ENCODE measurements at regions of chr10 and their contacts with region 1.

Region 1: GRCh38 chr10:97612386-97612785 is 20.9 kb downstream of the MORN4 start:
- DNase-seq: no peak
- ATAC-seq: peak; percentile 63 to 79
- H3K4me3 ChIP-seq: no peak overlapping the region
- H3K27ac ChIP-seq: peak overlapping the region; percentile 64
- H3K4me1 ChIP-seq: peaks cover 3% of the 10 kb centered on the region
- H3K27me3 ChIP-seq: no peaks in the 10 kb centered on the region

Region 2: DNA sequence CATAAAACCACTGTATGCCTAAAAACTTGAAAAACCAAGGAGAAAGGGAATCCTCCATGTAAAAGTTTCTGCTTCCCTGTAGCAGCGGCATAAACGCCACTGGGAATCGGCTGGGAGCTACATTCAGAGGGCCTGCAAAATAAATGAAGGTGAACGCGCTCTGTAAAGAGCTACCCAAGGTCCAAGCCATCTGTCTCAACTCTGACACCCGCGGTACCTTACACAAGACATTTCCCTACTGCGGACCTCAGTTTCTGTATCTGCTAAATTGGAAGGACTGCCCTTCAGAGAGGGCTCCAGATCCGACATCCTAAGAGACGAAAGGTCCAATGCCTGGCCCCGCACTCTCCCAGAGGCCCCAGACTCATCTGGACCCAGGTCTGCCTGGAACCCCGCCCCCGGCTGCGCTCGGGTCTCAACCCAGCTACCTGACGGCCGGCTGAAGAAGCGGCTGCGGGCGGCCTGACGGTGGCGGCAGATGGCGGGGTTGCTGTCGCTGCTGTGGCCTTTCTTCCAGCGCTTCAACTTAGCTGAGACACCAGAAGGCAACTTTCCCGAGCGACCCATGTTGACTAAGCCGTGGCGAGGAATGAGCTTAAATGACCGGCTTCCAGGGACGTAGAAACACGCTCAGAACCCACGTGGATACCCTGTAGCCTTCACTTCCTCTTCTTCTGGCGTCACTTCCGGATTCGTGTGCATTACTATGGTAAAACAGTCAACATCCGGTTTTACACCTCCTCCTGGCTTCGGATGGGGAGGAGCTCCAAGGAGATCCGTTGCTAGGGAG is 211.5 kb before region 1 on chr10 and contains the start of gene RRP12:
- intact Hi-C with region 1: loop called in 1 of 4 experiments (anchors 10 kb)
- DNase-seq: peak; percentile 75 to 84 (median 80)
- ATAC-seq: peak; percentile 98 to 99
- H3K4me3 ChIP-seq: peak within 1 kb of the TSS; percentile 80
- H3K27ac ChIP-seq: peak within 1 kb of the TSS; percentile 88
- H3K4me1 ChIP-seq: peaks cover 5% of the 10 kb centered on the region
- H3K27me3 ChIP-seq: no peaks in the 10 kb centered on the region
- total RNA-seq, gene RRP12: 10.8 to 21.2 (median 14.2) TPM

Region 3: DNA sequence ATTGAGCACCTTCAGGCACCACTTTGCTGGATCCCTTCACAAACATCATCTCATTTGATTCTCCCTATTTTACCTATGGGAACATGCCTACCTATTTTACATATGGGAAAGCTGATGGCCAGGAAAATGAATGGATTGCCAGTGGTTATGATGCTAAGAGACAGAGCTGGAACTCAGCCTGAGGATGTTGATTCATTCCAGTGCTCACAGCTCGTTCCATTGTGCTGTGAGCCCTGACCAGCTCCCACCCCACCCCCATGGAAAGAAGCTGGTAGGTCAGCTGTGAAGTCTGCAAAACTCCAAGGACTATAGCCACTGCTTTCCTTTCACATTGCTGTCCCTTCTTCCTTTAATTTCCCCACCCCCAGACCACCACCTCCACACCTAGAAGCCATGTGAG is 104.0 kb before region 1 on chr10:
- intact Hi-C with region 1: no loop called
- DNase-seq: no peak
- ATAC-seq: no peak
- H3K4me3 ChIP-seq: no peak overlapping the region
- H3K27ac ChIP-seq: no peak overlapping the region
- H3K4me1 ChIP-seq: peaks cover 16% of the 10 kb centered on the region
- H3K27me3 ChIP-seq: no peaks in the 10 kb centered on the region

Region 4: DNA sequence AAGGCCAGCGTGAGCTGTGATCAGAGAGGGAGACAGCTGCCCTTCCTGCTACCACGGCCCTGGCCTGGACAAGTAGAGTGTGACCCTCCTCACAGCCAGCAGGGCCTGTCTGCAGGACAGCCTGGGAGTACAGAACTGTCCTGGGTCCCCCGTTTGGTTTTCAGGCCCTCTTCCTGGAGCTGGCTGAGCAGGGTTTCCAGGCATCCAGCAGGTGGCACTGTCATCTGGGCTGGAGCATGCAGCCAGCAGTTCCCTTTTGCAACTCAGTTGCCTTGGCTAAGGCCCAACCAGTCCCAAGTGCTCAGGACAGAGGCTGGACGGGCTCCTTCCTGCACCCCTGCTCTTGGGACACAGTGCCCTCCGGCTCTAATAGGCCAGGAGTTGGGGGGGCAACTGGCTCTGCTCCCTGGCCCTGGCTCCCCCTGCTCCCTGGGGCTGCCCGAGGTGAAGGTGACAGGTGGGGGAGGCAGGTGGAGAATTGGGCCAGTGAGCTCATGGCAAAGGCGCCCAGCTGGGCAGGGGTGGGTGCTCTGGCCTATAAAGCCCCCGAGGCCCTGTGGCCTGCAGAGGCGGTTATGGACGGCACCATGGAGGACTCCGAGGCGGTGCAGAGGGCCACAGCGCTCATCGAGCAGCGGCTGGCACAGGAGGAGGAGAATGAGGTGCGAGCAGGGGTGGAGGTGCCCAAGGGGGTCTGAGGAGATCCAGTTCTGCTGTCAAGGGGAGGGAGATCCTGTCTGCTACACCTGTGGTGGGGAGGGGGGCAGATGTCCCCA is 40.0 kb before region 1 on chr10 and contains the start of gene ANKRD2:
- intact Hi-C with region 1: loop called (anchors 2 to 5 kb)
- DNase-seq: peak; percentile 88 to 93 (median 91)
- ATAC-seq: peak; percentile 74 to 77
- H3K4me3 ChIP-seq: no peak within 1 kb of the TSS
- H3K27ac ChIP-seq: peak within 1 kb of the TSS; percentile 90
- H3K4me1 ChIP-seq: no peaks in the 10 kb centered on the region
- H3K27me3 ChIP-seq: no peaks in the 10 kb centered on the region
- total RNA-seq, gene ANKRD2: 9.9 to 19.3 (median 17.8) TPM